Activated CD4-positive, alpha-beta T cell treated with anti-CD3 and anti-CD28 coated beads for 36 hours (primary cell): ENCODE measurements at regions of chr4 and their contacts with region 1.

Region 1: DNA sequence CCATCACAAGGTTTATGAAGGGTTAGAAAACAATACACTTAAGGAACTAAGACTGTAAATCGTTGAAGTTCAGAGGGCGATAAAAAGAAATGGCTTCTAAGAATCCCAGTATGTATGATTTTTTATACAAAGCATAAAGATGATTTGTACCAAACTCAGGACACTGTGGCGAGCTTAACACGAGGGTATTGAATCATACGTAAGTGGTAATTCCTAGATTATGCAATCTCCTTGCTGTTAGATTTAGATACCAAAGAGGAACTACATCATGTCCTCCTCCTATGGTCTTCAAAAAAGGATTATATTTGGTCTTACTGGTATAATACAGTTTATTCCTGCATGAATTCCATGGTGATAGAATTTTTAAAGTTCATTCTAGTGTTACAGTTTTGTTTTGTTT is 23.9 kb downstream of the NFKB1 start:
- DNase-seq: no peak
- ATAC-seq: no peak
- H3K4me3 Mint-ChIP-seq: peak overlapping the region; percentile 37
- H3K27ac Mint-ChIP-seq: peak overlapping the region; percentile 88
- H3K4me1 Mint-ChIP-seq: peaks cover 91% of the 10 kb centered on the region
- H3K27me3 Mint-ChIP-seq: no peaks in the 10 kb centered on the region

Region 2: GRCh38 chr4:102449751-102450352 is 75.2 kb before region 1 on chr4:
- CTCF ChIA-PET with region 1: interaction called, 3 read pairs
- POLR2A ChIA-PET with region 1: no interaction called
- intact Hi-C with region 1: loop called in 1 of 2 experiments (anchors 2 kb)
- DNase-seq: peak; percentile 69
- ATAC-seq: peak; percentile 86
- H3K4me3 Mint-ChIP-seq: no peak overlapping the region
- H3K27ac Mint-ChIP-seq: no peak overlapping the region
- H3K4me1 Mint-ChIP-seq: peaks cover 54% of the 10 kb centered on the region
- H3K27me3 Mint-ChIP-seq: no peaks in the 10 kb centered on the region

Region 3: GRCh38 chr4:102535398-102536082 is 10.4 kb after region 1 on chr4:
- CTCF ChIA-PET with region 1: interaction called, 11 read pairs
- POLR2A ChIA-PET with region 1: no interaction called
- intact Hi-C with region 1: loop called (anchors 1 kb)
- DNase-seq: no peak
- ATAC-seq: peak; percentile 90
- H3K4me3 Mint-ChIP-seq: peak overlapping the region; percentile 39
- H3K27ac Mint-ChIP-seq: peak overlapping the region; percentile 25
- H3K4me1 Mint-ChIP-seq: peaks cover 58% of the 10 kb centered on the region
- H3K27me3 Mint-ChIP-seq: no peaks in the 10 kb centered on the region

Region 4: DNA sequence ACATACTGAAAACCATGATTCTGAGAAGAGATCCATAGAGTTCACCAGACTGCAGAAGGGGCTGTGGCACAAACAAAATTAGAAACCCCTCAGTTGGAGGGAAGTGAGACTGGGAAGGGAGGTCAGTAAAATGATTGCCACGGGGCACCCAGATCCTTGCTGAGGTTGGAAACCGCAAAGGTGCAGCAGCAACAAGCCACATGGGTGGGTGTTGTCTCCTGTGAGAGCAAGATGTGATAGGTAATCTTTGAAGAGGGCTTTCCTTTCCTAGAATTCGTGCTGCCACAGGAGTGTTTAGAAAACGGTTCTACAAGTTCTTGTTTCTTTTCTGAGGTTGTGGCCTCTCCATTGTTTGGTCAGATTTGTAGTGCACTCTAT is 61.5 kb after region 1 on chr4:
- CTCF ChIA-PET with region 1: no interaction called
- POLR2A ChIA-PET with region 1: no interaction called
- intact Hi-C with region 1: loop called in 1 of 2 experiments (anchors 2 kb)
- DNase-seq: peak; percentile 62
- ATAC-seq: peak; percentile 28
- H3K4me3 Mint-ChIP-seq: no peak overlapping the region
- H3K27ac Mint-ChIP-seq: peak overlapping the region; percentile 79
- H3K4me1 Mint-ChIP-seq: peaks cover 88% of the 10 kb centered on the region
- H3K27me3 Mint-ChIP-seq: no peaks in the 10 kb centered on the region

Region 5: DNA sequence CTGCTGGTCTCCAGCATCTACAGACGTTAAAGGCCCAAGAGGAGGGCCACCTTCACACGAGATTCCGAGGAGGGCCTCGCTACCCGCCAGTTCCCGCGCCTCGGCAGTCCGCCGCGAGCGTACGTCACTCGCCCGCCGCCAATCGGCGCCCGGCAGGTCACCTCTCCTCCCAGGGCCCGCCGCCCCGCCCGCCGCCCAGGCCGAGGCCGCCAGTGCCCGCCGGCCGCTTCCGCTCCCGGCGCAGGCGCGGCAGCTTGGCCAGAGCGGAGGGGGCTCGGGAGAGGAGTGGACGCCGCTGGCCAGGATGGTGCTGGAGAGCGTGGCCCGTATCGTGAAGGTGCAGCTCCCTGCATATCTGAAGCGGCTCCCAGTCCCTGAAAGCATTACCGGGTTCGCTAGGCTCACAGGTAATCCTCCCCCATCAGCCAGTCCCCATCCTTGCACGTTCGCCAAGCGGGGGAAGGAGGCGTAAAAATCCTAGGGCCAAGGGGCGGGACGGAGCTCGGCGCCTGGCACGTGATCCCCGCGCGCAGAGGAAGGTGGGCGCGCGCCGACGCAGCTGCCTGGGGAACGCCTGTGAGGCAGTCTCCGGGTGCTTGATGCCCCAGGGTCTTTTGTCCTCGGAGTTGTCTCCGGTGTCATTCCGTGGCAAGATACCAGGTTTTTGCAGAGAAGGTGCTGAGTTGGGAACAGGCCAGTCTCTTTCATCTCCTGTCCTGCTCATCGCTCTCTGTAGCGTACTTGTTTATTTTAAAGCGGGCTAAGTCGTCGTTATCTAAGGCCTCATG is 343.9 kb after region 1 on chr4 and contains the start of gene CISD2:
- CTCF ChIA-PET with region 1: no interaction called
- POLR2A ChIA-PET with region 1: no interaction called
- intact Hi-C with region 1: loop called in 1 of 2 experiments (anchors 2 kb)
- DNase-seq: peak; percentile 96
- ATAC-seq: peak; percentile 88
- H3K4me3 Mint-ChIP-seq: peak within 1 kb of the TSS; percentile 95
- H3K27ac Mint-ChIP-seq: peak within 1 kb of the TSS; percentile 99
- H3K4me1 Mint-ChIP-seq: peaks cover 53% of the 10 kb centered on the region
- H3K27me3 Mint-ChIP-seq: no peaks in the 10 kb centered on the region
- total RNA-seq, gene CISD2: 33.5 to 35.1 TPM